A549 (cell line): ENCODE measurements at regions of chr19 and their contacts with region 1.

Region 1: DNA sequence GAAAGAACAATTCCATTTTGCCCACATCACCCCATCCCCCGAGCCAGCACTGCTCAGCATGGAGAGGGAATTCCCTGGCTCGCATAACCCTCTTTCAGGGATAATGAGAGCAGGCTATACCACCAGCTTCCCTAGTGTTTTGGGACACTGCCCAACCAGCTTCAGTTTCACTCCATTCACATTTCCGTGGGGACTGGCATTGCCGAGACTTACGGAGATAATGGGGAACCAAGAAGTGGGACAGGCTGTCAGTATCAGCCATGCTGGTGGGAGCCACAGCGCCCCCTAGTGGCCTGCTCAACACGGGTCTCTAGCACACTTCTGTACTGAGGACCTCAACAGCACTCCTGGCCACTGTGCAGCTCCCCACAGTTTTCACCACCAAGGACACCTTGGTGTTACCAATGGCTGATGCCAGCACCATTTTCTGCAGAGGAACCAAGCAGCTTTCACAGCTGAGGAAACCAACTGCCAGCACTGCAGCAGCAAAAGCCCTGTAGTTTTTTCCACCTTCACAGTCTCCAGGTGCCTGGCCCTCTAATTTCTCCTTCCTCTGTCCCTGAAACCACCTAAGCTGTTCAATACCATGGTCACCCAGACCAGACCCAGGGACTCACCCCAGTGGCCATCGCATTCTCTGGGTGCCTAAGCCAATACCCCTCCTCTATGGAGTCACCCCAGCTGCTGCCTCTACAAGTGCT is 23.7 kb downstream of the SLC6A16 start:
- DNase-seq: peak; percentile 78 to 91
- ATAC-seq: peak; percentile 99 to 100
- H3K4me3 ChIP-seq: peak overlapping the region; percentile 29; the same call in 1 of the 3 replicates
- H3K27ac ChIP-seq: no peak overlapping the region
- H3K4me1 ChIP-seq: no peaks in the 10 kb centered on the region
- CTCF ChIP-seq: peak; percentile 92
- EP300 ChIP-seq: no peak
- POLR2A ChIP-seq: no peak
- RAD21 ChIP-seq: peak; percentile 41 to 57; a peak in 4 of 5 replicates

Region 2: GRCh38 chr19:49064768-49065611 is 236.3 kb before region 1 on chr19 and contains the start of gene NTF4:
- CTCF ChIA-PET with region 1: no interaction called
- POLR2A ChIA-PET with region 1: no interaction called
- DNase-seq: peak in 1 of 2 experiments; percentile 61
- ATAC-seq: peak; percentile 66 to 79
- H3K4me3 ChIP-seq: peak within 1 kb of the TSS; percentile 45
- H3K27ac ChIP-seq: peak within 1 kb of the TSS; percentile 56 to 82
- H3K4me1 ChIP-seq: peaks cover 18% of the 10 kb centered on the region
- CTCF ChIP-seq: peak; percentile 11; the same call in 2 of the 3 replicates
- EP300 ChIP-seq: no peak
- POLR2A ChIP-seq: no peak
- RAD21 ChIP-seq: no peak
- polyA plus RNA-seq, gene NTF4: 0.34 and 0.37 TPM in 2 replicates

Region 3: DNA sequence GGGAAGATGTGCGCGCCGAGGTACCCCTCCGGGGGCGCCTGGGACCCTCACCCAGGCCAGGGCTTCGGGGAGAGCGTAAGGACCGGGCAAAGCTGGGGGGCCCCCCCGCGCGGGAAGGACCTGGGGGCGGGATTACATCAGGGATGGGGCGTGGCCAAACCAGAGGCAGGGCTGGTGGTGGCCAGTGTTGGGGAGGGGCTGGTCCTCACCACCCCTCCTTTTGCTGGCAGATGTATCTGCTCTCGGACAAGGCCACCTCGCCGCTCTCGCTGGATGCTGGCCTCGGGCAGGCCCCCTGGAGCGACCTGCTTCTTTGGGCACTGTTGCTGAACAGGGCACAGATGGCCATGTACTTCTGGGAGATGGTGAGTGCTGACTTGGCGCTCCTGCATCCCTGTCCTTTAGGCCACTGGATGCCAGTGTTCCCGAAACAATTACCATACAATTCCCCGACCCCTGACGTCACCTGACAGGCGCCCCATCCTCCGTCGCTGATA is 118.4 kb before region 1 on chr19:
- CTCF ChIA-PET with region 1: interaction called, 10 read pairs
- POLR2A ChIA-PET with region 1: no interaction called
- DNase-seq: no peak
- ATAC-seq: no peak
- H3K4me3 ChIP-seq: no peak overlapping the region
- H3K27ac ChIP-seq: no peak overlapping the region
- H3K4me1 ChIP-seq: no peaks in the 10 kb centered on the region
- CTCF ChIP-seq: no peak
- EP300 ChIP-seq: no peak
- POLR2A ChIP-seq: no peak
- RAD21 ChIP-seq: no peak

Region 4: DNA sequence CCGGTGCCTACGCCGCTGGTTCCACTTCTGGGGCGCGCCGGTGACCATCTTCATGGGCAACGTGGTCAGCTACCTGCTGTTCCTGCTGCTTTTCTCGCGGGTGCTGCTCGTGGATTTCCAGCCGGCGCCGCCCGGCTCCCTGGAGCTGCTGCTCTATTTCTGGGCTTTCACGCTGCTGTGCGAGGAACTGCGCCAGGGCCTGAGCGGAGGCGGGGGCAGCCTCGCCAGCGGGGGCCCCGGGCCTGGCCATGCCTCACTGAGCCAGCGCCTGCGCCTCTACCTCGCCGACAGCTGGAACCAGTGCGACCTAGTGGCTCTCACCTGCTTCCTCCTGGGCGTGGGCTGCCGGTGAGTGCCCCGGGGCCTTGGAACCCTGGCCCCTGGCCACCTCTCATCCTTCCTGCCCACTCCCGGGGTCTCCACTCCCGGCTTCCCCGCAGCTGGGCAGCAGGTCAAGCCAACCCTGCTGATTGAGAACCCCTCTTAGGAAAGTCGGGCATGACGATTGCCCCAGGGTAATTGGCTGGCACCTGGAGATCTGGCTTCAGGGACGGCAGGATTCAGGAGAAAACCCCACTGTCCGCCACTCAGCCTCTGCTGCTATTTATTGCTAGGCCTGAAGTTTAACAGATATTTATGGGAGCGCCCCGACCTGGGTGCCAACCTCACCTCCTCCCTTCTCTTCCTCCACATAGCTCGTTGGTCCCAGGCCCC is 104.6 kb before region 1 on chr19:
- CTCF ChIA-PET with region 1: no interaction called
- POLR2A ChIA-PET with region 1: no interaction called
- DNase-seq: no peak
- ATAC-seq: no peak
- H3K4me3 ChIP-seq: no peak overlapping the region
- H3K27ac ChIP-seq: no peak overlapping the region
- H3K4me1 ChIP-seq: peaks cover 4% of the 10 kb centered on the region; the same call in 1 of the 3 replicates
- CTCF ChIP-seq: no peak
- EP300 ChIP-seq: no peak
- POLR2A ChIP-seq: no peak
- RAD21 ChIP-seq: no peak

Region 5: GRCh38 chr19:49255674-49256073 is 45.6 kb before region 1 on chr19:
- CTCF ChIA-PET with region 1: interaction called, 26 read pairs
- POLR2A ChIA-PET with region 1: no interaction called
- DNase-seq: no peak
- ATAC-seq: peak in 1 of 2 experiments; percentile 32; a peak in 2 of 6 replicates
- H3K4me3 ChIP-seq: no peak overlapping the region
- H3K27ac ChIP-seq: no peak overlapping the region
- H3K4me1 ChIP-seq: no peaks in the 10 kb centered on the region
- CTCF ChIP-seq: no peak
- EP300 ChIP-seq: no peak
- POLR2A ChIP-seq: no peak
- RAD21 ChIP-seq: no peak

Region 6: DNA sequence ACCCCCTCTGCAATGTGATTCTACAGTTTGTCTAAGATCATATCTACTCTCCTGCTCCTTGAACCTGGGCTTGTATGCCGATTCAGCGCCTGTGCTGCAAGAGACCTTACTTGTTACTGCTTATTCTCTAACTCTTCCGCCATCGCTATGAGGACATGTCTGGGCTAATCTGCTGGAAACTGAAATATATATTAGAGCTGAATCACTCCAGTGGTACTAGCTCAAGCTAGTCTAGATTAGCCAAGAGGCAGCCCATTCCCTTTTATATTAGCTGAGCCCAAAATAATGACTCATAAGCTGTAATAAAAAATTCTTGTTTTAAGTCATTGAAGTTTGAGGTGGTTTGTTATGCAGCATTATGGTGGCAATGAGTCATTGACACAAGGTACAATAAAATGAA is 29.1 kb before region 1 on chr19:
- CTCF ChIA-PET with region 1: interaction called, 46 read pairs
- POLR2A ChIA-PET with region 1: no interaction called
- DNase-seq: peak in 1 of 2 experiments; percentile 44
- ATAC-seq: peak in 1 of 2 experiments; percentile 34; a peak in 1 of 6 replicates
- H3K4me3 ChIP-seq: no peak overlapping the region
- H3K27ac ChIP-seq: peak overlapping the region in 1 of 2 experiments; percentile 45; a peak in 1 of 6 replicates
- H3K4me1 ChIP-seq: peaks cover 4% of the 10 kb centered on the region; the same call in 2 of the 3 replicates
- CTCF ChIP-seq: no peak
- EP300 ChIP-seq: no peak
- POLR2A ChIP-seq: no peak
- RAD21 ChIP-seq: no peak

Region 7: GRCh38 chr19:49287141-49287770 is 14.1 kb before region 1 on chr19:
- CTCF ChIA-PET with region 1: interaction called, 46 read pairs
- POLR2A ChIA-PET with region 1: interaction called, 4 read pairs
- DNase-seq: no peak
- ATAC-seq: no peak
- H3K4me3 ChIP-seq: no peak overlapping the region
- H3K27ac ChIP-seq: no peak overlapping the region
- H3K4me1 ChIP-seq: no peaks in the 10 kb centered on the region
- CTCF ChIP-seq: no peak
- EP300 ChIP-seq: no peak
- POLR2A ChIP-seq: no peak
- RAD21 ChIP-seq: no peak

Region 8: DNA sequence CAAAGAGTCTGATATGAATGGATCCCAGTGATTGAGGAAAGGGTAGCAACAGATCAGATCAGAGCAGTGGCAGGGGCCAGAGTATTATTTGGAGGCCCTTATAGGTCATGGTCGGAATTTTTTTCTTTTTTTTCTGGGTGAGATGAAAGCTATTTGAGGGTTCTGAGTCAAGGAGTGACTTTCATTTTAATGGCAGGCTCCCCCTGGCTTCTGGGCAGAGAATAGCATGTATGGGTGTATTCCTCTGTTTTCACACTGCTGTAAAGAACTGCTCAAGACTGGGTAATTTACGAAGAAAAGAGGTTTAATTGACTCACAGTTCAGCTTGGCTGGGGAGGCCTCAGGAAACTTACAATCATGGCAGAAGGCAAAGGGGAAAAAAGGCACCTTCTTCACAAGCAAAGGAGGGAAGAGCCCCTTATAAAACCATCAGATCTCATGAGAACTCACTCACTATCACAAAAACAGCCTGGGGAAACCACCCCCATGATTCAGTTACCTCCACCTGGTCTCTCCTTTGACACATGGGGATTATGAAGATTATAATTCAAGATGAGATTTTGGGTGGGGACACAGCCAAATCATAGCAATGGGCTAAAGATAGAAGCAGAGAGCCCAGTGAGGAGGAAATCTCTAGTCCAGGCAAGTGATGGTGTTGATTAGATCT is 26.7 kb after region 1 on chr19:
- CTCF ChIA-PET with region 1: interaction called, 25 read pairs
- POLR2A ChIA-PET with region 1: no interaction called
- DNase-seq: peak; percentile 51 to 56
- ATAC-seq: peak; percentile 72 to 74; a peak in 4 of 6 replicates
- H3K4me3 ChIP-seq: no peak overlapping the region
- H3K27ac ChIP-seq: no peak overlapping the region
- H3K4me1 ChIP-seq: no peaks in the 10 kb centered on the region
- CTCF ChIP-seq: peak; percentile 70
- EP300 ChIP-seq: no peak
- POLR2A ChIP-seq: no peak
- RAD21 ChIP-seq: peak in 1 of 2 experiments; percentile 35; a peak in 3 of 5 replicates

Region 9: GRCh38 chr19:49442793-49443365 is 141.6 kb after region 1 on chr19:
- CTCF ChIA-PET with region 1: no interaction called
- POLR2A ChIA-PET with region 1: no interaction called
- DNase-seq: peak; percentile 96 to 97
- ATAC-seq: peak; percentile 55 to 83
- H3K4me3 ChIP-seq: peak overlapping the region; percentile 79
- H3K27ac ChIP-seq: peak overlapping the region; percentile 85 to 89
- H3K4me1 ChIP-seq: peaks cover 19% of the 10 kb centered on the region
- CTCF ChIP-seq: no peak
- EP300 ChIP-seq: no peak
- POLR2A ChIP-seq: no peak; the same call in 1 of the 2 replicates
- RAD21 ChIP-seq: no peak